Motor neuron (in vitro differentiated cells): ENCODE measurements at regions of chr12 and their contacts with region 1.

Region 1: GRCh38 chr12:119432949-119433348 is 98.4 kb downstream of the CCDC60 start:
- ATAC-seq: peak in 1 of 8 experiments; percentile 65
- H3K4me3 ChIP-seq: no peak overlapping the region
- H3K27ac ChIP-seq: peak overlapping the region in 1 of 2 donors; percentile 24
- H3K4me1 ChIP-seq: no peaks in the 10 kb centered on the region

Region 2: DNA sequence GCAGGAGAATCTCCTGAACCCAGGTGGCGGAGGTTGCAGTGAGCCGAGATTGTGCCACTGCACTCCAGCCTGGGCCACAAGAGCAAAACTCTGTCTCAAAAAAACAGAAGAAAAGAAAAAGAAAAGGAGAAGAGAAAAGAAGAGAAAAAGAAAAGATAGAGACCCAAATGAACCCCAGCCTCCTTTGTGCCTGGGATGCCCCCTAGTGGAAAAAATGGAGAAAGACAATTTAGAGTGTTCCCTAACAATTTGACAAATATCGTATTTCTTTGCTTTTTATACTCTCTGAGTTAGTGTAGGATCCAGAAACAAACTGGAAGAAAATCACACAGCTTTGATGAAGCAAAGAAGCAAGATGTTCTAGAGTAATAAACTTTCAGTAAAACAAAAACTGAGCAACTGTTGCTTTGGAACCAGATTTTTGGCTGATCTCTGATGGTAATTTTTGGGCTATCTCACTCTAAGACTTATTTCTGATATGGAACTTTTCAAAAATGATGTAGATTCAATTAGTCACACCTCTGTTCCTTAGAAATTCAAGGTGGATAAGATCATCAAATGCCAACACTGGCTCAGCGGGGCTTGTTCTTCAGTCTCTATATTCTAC is 216.4 kb after region 1 on chr12:
- in situ Hi-C with region 1: loop called in 1 of 9 experiments (anchors 10 kb)
- ATAC-seq: peak in 2 of 8 experiments; percentile 37 to 47
- H3K4me3 ChIP-seq: no peak overlapping the region
- H3K27ac ChIP-seq: no peak overlapping the region
- H3K4me1 ChIP-seq: no peaks in the 10 kb centered on the region